Sigmoid colon (tissue), 7 donors: ENCODE measurements at regions of chr11 and their contacts with region 1.

Region 1: DNA sequence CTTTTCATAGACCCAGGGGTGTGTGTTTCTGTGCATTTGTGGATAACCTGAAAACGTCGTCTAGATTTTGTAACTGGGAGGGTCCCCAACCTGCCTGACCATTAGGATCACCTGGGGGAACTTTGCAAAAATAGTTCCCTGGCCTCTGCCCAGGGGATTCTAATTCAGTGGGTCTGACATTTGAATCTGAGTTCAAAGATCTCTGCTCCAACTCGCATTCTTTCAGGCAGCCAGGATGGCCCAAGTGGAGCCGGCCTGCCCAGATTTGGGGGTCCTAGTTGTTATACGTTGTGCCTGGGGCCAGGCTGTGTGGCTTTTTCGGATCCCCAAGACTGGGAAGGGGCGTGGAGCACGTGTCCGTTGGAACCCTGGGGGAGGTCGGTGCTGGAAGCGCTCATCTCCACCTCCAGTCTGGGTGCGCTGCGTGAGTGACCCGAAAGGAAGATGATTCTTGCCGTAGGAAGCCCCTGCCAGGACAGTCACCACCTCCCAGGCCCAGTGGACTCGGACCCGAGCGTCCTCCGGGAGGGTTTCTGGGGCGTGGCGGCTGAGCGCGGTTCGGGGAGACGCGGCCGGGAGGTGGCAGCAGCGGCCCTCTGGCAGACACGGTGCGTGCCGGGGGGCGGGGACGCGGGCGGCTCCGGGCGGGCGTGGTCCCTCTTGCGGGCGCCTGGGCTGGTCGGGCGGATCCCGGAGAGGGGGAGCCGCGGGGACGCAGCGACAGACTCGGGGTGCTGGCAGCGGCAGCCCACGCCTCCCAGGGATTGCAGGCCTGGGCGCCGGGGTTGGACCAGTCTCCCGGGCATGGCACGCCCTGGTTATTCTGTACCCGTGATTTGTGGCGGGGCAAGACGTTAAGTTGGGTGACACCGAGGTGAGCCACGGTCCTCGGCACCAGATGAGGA is 29.2 kb upstream of the PLET1 start:
- DNase-seq: peak; percentile 89
- H3K4me3 ChIP-seq: peak overlapping the region; percentile 43 to 82 (median 64)
- H3K27ac ChIP-seq: peak overlapping the region; percentile 80 to 91 (median 84)
- H3K4me1 ChIP-seq: peaks cover 0 to 33% (median 29%) of the 10 kb centered on the region in 4 donors
- H3K27me3 ChIP-seq: no peaks in the 10 kb centered on the region
- CTCF ChIP-seq: peak; percentile 30 to 89 (median 74)
- EP300 ChIP-seq: no peak
- POLR2A ChIP-seq: peak in 1 of 2 donors; percentile 15

Region 2: GRCh38 chr11:112392904-112393303 is 103.1 kb after region 1 on chr11:
- intact Hi-C with region 1: no loop called
- DNase-seq: no peak
- H3K4me3 ChIP-seq: no peak overlapping the region
- H3K27ac ChIP-seq: no peak overlapping the region
- H3K4me1 ChIP-seq: peaks cover 0 to 23% (median 7%) of the 10 kb centered on the region in 4 donors
- H3K27me3 ChIP-seq: no peaks in the 10 kb centered on the region
- CTCF ChIP-seq: no peak
- EP300 ChIP-seq: no peak
- POLR2A ChIP-seq: no peak

Region 3: DNA sequence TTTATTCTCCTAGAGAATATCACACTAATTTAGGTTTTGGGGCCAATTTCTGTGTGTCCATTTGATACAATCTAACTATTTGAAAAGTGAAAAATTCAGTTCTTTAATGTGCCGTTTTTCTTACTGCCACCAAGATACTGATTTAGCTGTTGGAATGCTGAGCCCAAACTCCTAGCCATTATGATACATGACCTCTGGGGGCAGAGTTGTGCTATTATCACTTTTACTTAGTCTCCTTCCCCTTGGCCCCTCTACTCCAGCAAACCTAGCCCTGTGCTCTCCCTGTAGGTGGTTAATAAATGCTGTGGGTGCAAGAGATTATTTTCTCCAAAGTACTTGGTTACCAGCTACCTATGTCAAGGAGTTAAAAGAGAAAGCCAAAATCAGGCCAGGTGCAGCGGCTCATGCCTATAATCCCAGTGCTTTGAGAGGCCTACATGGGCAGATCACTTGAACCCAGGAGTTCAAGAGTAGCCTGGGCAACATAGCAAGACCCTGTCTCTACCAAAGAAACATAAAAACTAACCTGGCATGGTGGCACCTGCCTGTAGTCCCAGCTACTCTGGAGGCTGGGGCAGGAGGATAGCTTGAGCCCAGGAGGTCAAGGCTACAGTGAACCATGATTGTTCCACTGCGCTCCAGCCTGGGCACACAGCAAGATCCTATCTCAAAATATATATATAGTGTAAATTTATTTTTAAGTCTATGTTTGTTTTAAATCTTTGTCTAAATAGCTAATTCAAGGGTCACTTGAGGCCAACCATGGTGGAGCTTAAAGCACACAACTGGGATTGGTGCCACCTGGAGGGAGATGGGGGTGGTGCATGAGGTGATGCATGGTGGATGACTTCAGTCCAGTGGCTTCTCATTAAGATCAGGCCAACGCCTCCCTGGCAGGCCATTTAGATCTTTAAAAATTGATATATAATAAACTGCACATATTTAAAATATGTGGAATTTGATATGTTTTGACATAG is 164.0 kb after region 1 on chr11:
- intact Hi-C with region 1: loop called (anchors 5 kb)
- DNase-seq: no peak
- H3K4me3 ChIP-seq: no peak overlapping the region
- H3K27ac ChIP-seq: no peak overlapping the region
- H3K4me1 ChIP-seq: no peaks in the 10 kb centered on the region
- H3K27me3 ChIP-seq: no peaks in the 10 kb centered on the region
- CTCF ChIP-seq: peak in 2 of 4 experiments; percentile 18 to 38
- EP300 ChIP-seq: no peak
- POLR2A ChIP-seq: no peak

Region 4: GRCh38 chr11:112588252-112588694 is 298.4 kb after region 1 on chr11:
- intact Hi-C with region 1: loop called (anchors 2 kb)
- DNase-seq: peak; percentile 88
- H3K4me3 ChIP-seq: no peak overlapping the region
- H3K27ac ChIP-seq: peak overlapping the region in 3 of 4 donors; percentile 71 to 76 (median 72)
- H3K4me1 ChIP-seq: peaks cover 0 to 41% (median 40%) of the 10 kb centered on the region in 4 donors
- H3K27me3 ChIP-seq: no peaks in the 10 kb centered on the region
- CTCF ChIP-seq: peak; percentile 69 to 71 (median 70)
- EP300 ChIP-seq: no peak
- POLR2A ChIP-seq: no peak

Region 5: DNA sequence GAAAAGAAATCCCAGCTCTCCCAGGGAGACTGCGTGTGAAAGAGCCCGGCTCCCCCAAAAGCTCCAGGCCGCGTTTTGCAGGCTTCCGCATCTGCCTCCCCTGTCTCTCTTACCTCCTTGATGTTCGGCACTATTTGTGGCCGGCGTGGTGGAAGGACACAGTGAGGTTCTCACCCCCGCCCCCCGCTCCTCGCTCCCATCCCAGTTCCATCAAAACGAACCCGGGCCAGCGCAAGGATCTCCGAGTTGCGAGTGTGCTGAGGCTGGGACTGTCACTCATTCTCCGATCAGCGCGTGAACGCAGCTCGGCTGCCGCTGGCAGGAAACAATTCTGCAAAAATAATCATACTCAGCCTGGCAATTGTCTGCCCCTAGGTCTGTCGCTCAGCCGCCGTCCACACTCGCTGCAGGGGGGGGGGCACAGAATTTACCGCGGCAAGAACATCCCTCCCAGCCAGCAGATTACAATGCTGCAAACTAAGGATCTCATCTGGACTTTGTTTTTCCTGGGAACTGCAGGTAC is 671.4 kb after region 1 on chr11 and contains the start of gene NCAM1:
- intact Hi-C with region 1: loop called (anchors 5 kb)
- DNase-seq: peak; percentile 87
- H3K4me3 ChIP-seq: peak within 1 kb of the TSS; percentile 57 to 73 (median 68)
- H3K27ac ChIP-seq: peak within 1 kb of the TSS; percentile 64 to 77 (median 76)
- H3K4me1 ChIP-seq: peaks cover 0 to 20% (median 17%) of the 10 kb centered on the region in 4 donors
- H3K27me3 ChIP-seq: peaks cover 0 to 16% (median 0%) of the 10 kb centered on the region in 3 donors
- CTCF ChIP-seq: no peak
- EP300 ChIP-seq: no peak
- POLR2A ChIP-seq: no peak
- total RNA-seq, gene NCAM1: 64.2 to 124 (median 90.4) TPM

Region 6: GRCh38 chr11:113289431-113290187 is 999.8 kb after region 1 on chr11:
- intact Hi-C with region 1: loop called (anchors 2 kb)
- DNase-seq: peak; percentile 80
- H3K4me3 ChIP-seq: no peak overlapping the region
- H3K27ac ChIP-seq: no peak overlapping the region
- H3K4me1 ChIP-seq: peaks cover 0 to 17% (median 17%) of the 10 kb centered on the region in 4 donors
- H3K27me3 ChIP-seq: no peaks in the 10 kb centered on the region
- CTCF ChIP-seq: peak; percentile 80 to 96 (median 86)
- EP300 ChIP-seq: no peak
- POLR2A ChIP-seq: no peak